Psoas muscle (tissue), 8 donors: ENCODE measurements at regions of chr19 and their contacts with region 1.

Region 1: DNA sequence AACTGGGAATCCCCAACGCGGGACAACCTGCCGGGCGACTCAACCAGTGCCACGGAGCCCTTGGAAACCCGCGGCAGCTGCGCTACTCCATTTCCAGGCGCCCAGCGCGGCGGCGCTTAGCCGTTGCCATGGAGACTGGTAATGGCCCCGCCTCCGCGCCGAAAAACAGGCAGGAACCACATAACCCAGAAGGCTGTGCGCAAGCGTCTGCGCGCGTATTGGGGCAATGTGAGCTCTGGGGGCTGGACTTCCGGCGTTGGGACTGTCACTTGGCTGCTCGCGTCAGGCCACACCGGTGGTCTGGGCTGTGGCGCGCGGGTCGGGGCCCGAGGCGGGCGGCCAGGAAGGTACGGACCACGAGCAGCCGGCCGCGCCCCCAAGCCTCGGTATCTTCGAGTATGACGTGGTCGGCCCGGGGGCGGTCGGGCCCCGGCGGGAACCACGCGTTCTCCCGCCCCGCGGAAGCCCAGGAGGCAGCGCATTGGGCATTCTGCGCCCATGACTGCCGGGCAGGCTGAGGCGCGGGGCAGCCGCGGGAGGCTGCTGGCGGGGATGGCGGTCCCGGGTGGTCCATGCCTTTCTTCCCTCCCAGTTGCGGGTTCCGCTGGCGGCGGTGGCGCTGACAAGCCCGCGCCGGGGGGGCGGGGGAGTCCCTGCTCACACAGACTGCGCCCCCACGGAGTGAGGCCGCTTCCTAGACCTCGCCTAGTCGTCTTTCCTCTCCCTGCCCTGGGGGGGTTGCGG is at the start of gene ZNF324B:
- DNase-seq: peak; percentile 97 to 98
- ATAC-seq: peak; percentile 99 to 100 (median 99)
- H3K4me3 ChIP-seq: peak within 1 kb of the TSS; percentile 97
- H3K27ac ChIP-seq: peak within 1 kb of the TSS; percentile 85
- H3K4me1 ChIP-seq: no peaks in the 10 kb centered on the region
- H3K27me3 ChIP-seq: peaks cover 0 to 15% (median 0%) of the 10 kb centered on the region in 3 donors
- CTCF ChIP-seq: no peak
- total RNA-seq, gene ZNF324B: 4.4 to 8.9 (median 4.9) TPM

Region 2: DNA sequence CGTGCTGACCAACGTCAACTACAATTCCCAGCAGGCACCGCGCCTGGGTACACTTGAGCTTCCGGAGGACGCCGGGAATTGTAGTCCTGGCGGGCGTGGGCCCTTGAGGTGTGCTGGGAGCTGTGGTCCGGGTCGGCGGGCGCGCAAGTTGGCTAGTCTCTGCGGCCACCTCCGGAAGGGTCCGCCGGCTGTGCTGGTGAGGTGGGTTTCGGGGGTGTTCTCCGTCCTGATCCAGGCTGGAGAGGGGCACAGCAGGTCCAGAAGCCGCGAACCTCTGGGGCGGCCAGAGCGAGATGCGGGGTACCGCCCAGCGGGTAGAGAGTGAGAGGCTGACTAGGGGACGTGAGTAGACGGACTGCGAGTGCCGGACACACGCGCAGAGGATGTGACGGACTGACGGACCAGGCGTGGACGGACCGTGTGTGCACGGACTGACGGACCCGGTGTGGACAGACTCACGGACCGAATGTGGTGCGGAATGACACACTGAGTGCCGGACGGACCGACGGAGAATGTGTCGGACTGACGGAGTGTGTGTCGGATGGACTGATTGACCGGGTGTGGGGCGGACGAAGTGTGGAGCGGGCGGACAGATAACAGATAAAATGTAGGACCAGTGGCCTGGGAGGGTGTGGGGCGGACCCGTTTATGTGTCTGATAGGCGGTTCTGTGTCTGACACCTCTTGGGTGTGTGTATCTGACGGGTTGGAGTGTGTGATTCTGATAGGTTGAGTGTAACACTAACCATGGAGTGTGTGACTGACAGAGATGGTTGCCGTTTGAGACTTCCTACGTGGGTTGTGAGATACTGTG is 124.4 kb before region 1 on chr19 and contains the start of gene ZSCAN22:
- intact Hi-C with region 1: loop called in 1 of 2 experiments (anchors 5 kb)
- DNase-seq: peak; percentile 98 to 99
- ATAC-seq: peak; percentile 97 to 98 (median 97)
- H3K4me3 ChIP-seq: peak within 1 kb of the TSS; percentile 95
- H3K27ac ChIP-seq: peak within 1 kb of the TSS; percentile 99
- H3K4me1 ChIP-seq: peaks cover 24% of the 10 kb centered on the region
- H3K27me3 ChIP-seq: no peaks in the 10 kb centered on the region
- CTCF ChIP-seq: no peak
- total RNA-seq, gene ZSCAN22: 2.0 to 3.1 (median 2.4) TPM

Region 3: DNA sequence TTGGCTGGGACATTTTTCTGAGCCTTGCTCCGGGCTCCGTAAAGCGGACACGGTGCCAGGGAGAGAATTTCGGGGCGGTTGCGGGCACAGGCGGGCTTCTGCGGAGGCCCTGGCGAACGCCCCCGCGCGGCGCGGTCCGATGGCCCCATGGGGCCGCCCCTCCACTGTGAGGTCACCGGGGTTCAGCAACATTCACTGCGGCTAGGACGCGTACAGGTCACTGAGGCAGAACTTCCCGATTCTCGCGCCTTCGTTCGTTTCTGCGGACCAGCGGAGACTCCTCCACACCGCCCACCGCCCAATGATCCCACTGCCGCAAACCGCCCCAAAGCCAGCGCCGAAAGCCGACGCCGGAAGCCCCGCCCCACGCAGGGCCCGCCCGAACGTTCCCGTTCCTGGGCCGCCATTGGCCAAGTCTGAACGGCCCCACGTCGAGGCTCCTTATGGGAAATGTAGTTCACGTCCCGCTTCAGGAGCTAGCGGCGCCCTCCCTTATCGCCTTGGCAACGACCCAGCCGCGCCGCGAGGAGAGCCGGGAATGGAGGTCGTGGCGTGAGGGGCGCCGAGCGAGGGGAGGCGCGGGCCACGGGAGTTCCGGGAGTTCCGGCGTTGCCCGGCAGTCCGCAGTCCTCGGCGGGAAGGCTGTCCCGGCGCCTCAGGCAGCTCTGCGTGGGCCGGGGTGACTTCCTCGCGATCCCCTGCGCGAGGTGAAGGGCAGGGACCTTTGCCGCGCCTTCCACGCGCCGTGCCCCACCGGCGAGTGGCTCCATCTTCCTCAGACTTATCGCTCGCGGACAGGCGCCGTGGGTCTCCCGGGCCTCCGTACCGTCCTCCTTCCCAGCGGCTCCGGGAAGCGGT is 43.1 kb before region 1 on chr19 and contains the start of gene ZNF584:
- intact Hi-C with region 1: loop called in 1 of 2 experiments (anchors 1 kb)
- DNase-seq: peak; percentile 95 to 97
- ATAC-seq: peak; percentile 98 to 99 (median 98)
- H3K4me3 ChIP-seq: peak within 1 kb of the TSS; percentile 86
- H3K27ac ChIP-seq: peak within 1 kb of the TSS; percentile 79
- H3K4me1 ChIP-seq: peaks cover 11% of the 10 kb centered on the region
- H3K27me3 ChIP-seq: no peaks in the 10 kb centered on the region
- CTCF ChIP-seq: no peak
- total RNA-seq, gene ZNF584: 9.5 to 16.2 (median 13.3) TPM